ENCODE measurements at regions of chr6 and their contacts with region 1.

Region 1: DNA sequence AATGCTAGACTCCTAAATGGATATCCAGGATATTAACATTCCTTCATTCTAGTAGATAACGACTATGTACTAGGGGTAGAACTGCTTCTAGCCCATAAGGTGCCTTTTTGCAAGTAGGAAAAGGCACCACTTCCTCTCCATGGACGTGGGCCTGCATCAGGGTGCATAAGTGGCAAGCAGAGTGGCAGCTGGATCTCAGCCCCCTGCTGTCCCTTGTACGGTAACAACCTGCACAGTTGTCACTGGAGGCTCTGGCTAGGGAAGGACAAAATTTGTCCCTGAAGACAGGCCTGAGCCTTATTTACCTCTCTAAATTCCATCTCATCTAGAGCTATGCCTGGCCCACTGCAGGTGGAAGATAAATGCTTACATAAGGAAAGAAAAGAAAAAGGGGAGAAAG is 42.5 kb upstream of the SAYSD1 start:
- DNase-seq: no peak
- H3K4me3 Mint-ChIP-seq: no peak overlapping the region
- H3K27ac Mint-ChIP-seq: no peak overlapping the region
- H3K4me1 Mint-ChIP-seq: no peaks in the 10 kb centered on the region
- H3K27me3 Mint-ChIP-seq: peaks cover 2% of the 10 kb centered on the region
- CTCF ChIP-seq: no peak

Region 2: GRCh38 chr6:38997128-38997761 is 160.3 kb before region 1 on chr6:
- CTCF ChIA-PET with region 1: interaction called, 3 read pairs
- intact Hi-C with region 1: loop called (anchors 5 kb)
- DNase-seq: peak; percentile 68
- H3K4me3 Mint-ChIP-seq: no peak overlapping the region
- H3K27ac Mint-ChIP-seq: no peak overlapping the region
- H3K4me1 Mint-ChIP-seq: no peaks in the 10 kb centered on the region
- H3K27me3 Mint-ChIP-seq: peaks cover 29% of the 10 kb centered on the region
- CTCF ChIP-seq: peak; percentile 68

Measured in Calu3 (cell line).